Tibial artery (tissue), 4 donors: ENCODE measurements at regions of chr2 and their contacts with region 1.

Region 1: DNA sequence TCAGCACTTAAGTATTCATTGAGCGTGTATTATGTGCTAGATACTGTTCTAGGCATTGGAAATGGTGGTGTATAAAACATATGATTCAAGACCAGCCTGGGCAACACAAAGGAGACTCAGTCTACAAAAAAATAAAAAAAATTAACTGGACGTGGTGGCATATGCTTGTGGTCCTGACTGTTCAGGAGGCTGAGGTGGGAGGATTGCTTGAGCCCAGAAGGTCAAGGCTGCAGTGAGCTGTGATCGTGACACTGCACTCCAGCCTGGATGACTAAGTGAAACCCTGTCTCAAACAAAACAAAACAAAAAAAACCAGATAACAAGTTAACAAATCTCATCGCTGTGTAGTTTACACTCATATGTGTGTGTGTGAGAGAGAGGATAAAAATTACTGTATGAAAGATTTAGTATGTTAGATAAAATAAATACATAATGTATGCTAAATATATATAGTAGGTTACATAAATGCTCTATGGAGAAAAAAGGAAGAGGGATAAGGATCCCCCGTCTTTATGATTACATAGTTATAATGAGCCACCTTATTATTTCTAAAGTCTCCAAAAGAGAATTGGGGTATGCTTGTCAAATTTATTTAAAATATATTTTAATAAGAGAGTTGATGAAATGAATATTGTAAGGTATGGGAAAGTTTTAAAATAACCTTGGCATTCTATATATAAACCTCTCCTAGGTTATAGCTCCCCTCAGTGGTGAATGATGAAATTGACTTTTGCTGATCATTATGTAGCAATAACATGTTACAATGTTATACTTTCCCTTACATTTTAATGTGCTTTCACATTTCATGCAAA is 69.2 kb downstream of the EHBP1 start:
- DNase-seq: no peak
- H3K4me3 ChIP-seq: no peak overlapping the region
- H3K27ac ChIP-seq: no peak overlapping the region
- H3K4me1 ChIP-seq: peaks cover 0 to 5% (median 0%) of the 10 kb centered on the region in 4 donors
- H3K27me3 ChIP-seq: no peaks in the 10 kb centered on the region
- CTCF ChIP-seq: peak; percentile 73 to 88

Region 2: DNA sequence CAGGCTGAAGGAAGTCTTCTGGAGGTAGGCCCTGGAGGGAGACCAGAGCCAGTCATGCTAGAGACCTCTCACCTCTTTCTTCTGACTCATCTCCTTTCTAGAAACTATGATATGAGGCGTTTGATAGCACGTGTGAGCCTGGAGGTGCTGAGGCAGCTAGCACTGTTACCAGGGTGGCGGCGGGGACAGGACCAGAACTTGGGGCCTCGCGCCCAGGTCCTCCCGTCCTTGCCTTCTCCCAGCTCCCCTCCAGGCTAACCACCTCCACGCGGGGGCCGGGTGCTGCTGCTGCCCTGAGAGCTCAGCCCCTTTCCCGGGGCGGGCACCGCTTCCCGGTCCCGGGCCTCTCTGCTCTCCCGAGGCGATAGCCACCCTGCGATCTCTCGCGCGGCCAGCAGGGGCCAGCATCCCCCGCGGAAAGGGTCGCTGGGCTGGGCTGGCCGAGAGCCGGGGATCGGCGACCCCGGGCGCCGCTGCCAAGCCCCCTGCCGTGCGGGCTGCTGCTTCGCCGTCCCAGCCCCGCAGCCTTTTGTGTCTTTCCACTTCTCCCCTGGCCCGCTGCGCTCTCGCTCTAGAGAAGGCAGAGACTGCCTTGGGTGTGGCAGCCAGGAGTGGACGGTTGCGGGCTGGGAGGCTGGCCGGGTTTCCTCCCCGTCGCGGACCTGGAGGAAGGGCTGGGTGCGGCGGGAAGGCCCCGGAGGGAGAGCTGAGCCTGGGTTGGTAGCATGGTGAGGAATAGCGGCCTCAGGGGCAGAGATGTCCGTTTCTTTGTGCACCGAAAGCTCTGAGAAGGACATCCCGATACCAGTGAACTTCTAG is 317.8 kb before region 1 on chr2:
- intact Hi-C with region 1: loop called (anchors 1 kb)
- DNase-seq: peak; percentile 60 to 79
- H3K4me3 ChIP-seq: peak overlapping the region; percentile 58 to 77
- H3K27ac ChIP-seq: peak overlapping the region; percentile 68 to 69
- H3K4me1 ChIP-seq: peaks cover 4 to 8% (median 6%) of the 10 kb centered on the region in 4 donors
- H3K27me3 ChIP-seq: no peaks in the 10 kb centered on the region
- CTCF ChIP-seq: peak; percentile 97 to 99

Region 3: DNA sequence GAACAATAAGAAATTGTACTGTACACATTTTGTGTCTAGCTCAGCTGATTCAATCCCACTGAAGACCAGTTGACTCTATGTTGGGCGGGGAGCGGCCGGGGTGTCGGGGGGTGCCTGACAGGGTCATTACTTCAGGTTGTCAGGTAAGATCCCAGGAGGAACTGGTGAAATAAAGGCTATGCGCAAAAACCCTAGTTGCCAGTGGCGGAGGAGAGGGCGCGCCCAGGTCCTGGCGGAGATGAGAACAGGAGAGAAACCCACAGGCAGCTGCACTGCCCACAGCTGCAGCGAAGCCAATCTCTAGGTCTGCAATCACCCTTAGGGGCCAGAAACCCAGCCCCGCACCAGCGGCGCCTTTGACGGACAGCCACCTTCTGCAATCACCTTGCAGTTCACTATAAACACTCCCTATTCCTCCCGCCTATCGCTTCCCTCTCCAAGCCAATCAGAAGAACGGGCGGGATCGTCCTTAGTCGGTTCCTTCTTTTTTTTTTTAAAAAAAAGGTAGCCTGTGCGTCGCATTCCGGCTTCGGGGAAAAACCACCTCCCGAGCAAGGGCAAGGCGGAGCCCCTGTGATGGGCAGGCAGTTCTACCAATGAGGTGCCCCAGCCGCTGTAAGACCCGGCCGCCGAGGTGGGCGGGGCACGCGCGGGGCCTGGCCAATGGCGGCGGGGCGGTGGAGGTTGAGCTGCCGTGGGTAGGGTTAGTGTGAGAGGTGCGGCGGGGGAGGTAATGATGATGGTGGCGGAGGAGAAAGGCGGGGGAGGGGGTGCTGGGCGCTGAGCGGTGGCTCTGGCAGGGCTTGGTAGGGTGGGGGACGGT is 69.5 kb before region 1 on chr2 and contains the start of gene EHBP1:
- intact Hi-C with region 1: no loop called
- DNase-seq: peak; percentile 98 to 100
- H3K4me3 ChIP-seq: peak within 1 kb of the TSS; percentile 69 to 92
- H3K27ac ChIP-seq: peak within 1 kb of the TSS; percentile 89 to 96
- H3K4me1 ChIP-seq: peaks cover 0 to 39% (median 20%) of the 10 kb centered on the region in 4 donors
- H3K27me3 ChIP-seq: no peaks in the 10 kb centered on the region
- CTCF ChIP-seq: no peak